Kidney (tissue), 22 donors: ENCODE measurements at regions of chr10 and their contacts with region 1.

Region 1: DNA sequence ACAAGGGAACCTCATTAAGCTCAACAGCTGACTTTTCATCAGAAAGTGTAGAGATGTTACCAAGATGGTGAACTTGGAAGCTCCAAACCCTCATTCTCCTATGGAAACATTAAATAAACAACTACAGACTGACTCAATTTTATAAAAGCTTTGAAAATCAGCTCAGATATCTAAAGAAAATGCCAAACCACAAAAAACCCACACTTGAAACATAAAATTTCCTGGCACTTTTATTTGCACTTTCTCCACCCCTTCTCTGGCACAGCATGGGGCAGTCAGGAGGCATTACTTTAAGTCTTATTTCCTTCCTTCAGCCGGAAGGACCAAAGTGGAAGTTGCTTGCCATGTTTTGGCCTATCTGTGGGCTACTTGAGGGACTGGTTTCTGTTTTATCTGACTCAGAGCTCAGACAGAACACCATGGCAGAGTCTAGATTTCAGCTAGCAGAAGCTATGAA is 114.7 kb downstream of the ODAD2 start:
- DNase-seq: no peak
- H3K4me3 ChIP-seq: no peak overlapping the region
- H3K27ac ChIP-seq: no peak overlapping the region
- H3K4me1 ChIP-seq: no peaks in the 10 kb centered on the region
- H3K27me3 ChIP-seq: no peaks in the 10 kb centered on the region
- CTCF ChIP-seq: no peak

Region 2: DNA sequence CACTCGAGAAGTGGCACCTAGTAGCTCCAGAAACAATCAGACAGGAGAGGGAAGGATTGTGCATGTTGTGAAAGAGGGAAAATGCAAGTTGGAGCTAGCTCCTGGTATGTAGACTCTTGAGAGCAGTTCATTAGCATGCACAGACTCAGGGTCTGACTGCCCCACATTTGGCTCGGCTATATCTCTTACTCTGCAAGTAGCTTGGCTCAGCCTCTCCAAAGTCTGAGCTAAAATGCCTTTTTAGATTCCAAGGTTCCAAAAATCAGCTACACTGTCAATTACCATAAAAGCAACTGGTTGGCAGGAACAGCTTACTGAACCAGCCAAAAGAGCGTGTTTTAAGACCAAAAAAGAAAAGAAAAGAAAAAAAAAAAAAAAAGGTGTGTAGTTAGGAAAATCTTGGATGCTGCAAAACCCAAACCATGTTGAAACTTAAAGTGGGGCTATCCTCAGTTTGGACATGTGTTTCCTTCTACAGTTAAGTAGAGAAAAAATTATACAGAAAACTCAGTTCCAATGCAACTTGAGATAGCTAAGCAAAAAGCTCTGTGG is 204.1 kb before region 1 on chr10:
- intact Hi-C with region 1: loop called (anchors 5 kb)
- DNase-seq: no peak
- H3K4me3 ChIP-seq: no peak overlapping the region
- H3K27ac ChIP-seq: no peak overlapping the region
- H3K4me1 ChIP-seq: no peaks in the 10 kb centered on the region
- H3K27me3 ChIP-seq: no peaks in the 10 kb centered on the region
- CTCF ChIP-seq: no peak